GM12878 (cell line): ENCODE measurements at regions of chr12 and their contacts with region 1.

Region 1: GRCh38 chr12:124992874-124993625 is 395 bp upstream of the BRI3BP start:
- DNase-seq: peak; percentile 69
- ATAC-seq: peak; percentile 61
- H3K4me3 ChIP-seq: peak overlapping the region; percentile 58; the same call in 1 of the 2 replicates
- H3K27ac ChIP-seq: peak overlapping the region; percentile 47
- H3K4me1 ChIP-seq: peaks cover 14% of the 10 kb centered on the region
- H3K27me3 ChIP-seq: no peaks in the 10 kb centered on the region
- CTCF ChIP-seq: peak; percentile 61 to 71 (median 66)
- EP300 ChIP-seq: no peak
- POLR2A ChIP-seq: peak; percentile 34; the same call in 1 of the 2 replicates
- RAD21 ChIP-seq: 0 out of 2 replicates have a peak, but pooled peaks have one; percentile 5

Region 2: DNA sequence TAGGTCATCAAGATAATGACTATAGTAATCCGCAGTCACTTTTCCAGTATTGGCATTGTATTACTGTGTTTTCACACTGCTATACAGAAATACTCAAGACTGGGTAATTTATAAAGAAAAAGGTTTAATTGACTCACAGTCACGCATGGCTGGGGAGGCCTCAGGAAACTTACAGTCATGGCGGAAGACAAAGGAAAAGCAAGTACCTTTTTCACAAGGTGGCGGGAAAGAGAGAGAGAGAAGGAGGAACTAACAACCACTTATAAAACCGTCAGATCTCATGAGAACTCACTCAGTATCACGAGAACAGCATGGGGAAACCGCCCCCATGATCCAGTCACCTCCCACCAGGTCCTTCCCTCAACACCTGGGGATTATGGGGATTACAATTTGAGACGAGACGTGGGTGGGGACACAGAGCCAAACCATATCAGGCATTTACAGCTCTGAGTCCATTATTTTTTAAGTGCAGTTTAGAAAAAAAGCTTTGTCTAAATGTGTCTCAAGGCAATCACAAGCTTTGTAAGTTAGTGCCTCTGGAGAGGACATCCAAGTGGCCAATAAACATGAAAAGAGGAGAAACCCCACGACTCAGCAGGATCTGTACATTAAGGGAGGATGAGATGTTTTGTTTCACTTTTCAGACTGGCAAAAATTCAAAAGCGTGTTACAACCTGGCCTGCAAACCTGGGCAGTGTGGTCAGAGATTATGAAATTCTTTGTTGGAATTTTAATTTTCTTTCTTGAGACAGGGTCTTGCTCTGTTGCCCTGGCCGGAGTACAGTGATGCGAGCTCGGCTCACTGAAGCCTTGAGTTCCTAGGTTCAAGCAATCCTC is 1148.9 kb before region 1 on chr12:
- CTCF ChIA-PET with region 1: no interaction called
- POLR2A ChIA-PET with region 1: no interaction called
- RAD21 ChIA-PET with region 1: no interaction called
- SMC1A ChIA-PET with region 1: no interaction called
- in situ Hi-C with region 1: no loop called
- intact Hi-C with region 1: no loop called
- DNase-seq: no peak
- ATAC-seq: no peak
- H3K4me3 ChIP-seq: no peak overlapping the region
- H3K27ac ChIP-seq: no peak overlapping the region
- H3K4me1 ChIP-seq: peaks cover 7% of the 10 kb centered on the region; the same call in 1 of the 2 replicates
- H3K27me3 ChIP-seq: no peaks in the 10 kb centered on the region
- CTCF ChIP-seq: no peak
- EP300 ChIP-seq: no peak
- POLR2A ChIP-seq: no peak
- RAD21 ChIP-seq: no peak

Region 3: GRCh38 chr12:124578445-124578844 is 414.6 kb before region 1 on chr12:
- CTCF ChIA-PET with region 1: no interaction called
- POLR2A ChIA-PET with region 1: no interaction called
- RAD21 ChIA-PET with region 1: no interaction called
- SMC1A ChIA-PET with region 1: no interaction called
- in situ Hi-C with region 1: no loop called
- intact Hi-C with region 1: no loop called
- DNase-seq: no peak
- ATAC-seq: no peak
- H3K4me3 ChIP-seq: no peak overlapping the region
- H3K27ac ChIP-seq: no peak overlapping the region
- H3K4me1 ChIP-seq: no peaks in the 10 kb centered on the region
- H3K27me3 ChIP-seq: no peaks in the 10 kb centered on the region
- CTCF ChIP-seq: no peak
- EP300 ChIP-seq: no peak
- POLR2A ChIP-seq: no peak
- RAD21 ChIP-seq: no peak

Region 4: GRCh38 chr12:124940549-124941527 is 52.2 kb before region 1 on chr12:
- CTCF ChIA-PET with region 1: interaction called, 20 read pairs
- POLR2A ChIA-PET with region 1: interaction called, 19 read pairs
- RAD21 ChIA-PET with region 1: interaction called, 15 read pairs
- SMC1A ChIA-PET with region 1: interaction called, 8 read pairs
- in situ Hi-C with region 1: no loop called
- intact Hi-C with region 1: loop called (anchors 1 kb)
- DNase-seq: peak; percentile 82
- ATAC-seq: peak; percentile 74
- H3K4me3 ChIP-seq: peak overlapping the region; percentile 68
- H3K27ac ChIP-seq: peak overlapping the region; percentile 97
- H3K4me1 ChIP-seq: peaks cover 17% of the 10 kb centered on the region
- H3K27me3 ChIP-seq: no peaks in the 10 kb centered on the region
- CTCF ChIP-seq: peak; percentile 92 to 98 (median 93)
- EP300 ChIP-seq: no peak
- POLR2A ChIP-seq: peak; percentile 68
- RAD21 ChIP-seq: peak; percentile 63

Region 5: DNA sequence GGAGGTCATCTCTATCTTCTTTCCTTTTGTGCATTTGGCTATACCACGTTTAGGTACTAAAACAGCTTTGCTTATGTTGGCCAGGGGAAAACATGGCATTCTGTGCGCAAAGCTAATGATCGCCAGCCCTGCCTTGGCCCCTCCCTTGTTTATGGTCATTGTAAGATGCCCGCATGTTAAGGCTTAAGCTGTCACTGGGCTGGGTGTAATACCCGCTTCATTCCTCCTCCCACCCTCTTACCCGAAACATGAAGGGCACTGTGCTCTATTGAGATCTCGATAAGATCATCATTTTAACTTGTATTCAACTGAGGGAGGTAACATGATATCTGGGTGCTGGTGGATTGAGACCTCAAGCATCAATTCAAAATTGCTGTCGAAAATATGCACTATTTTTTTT is 35.1 kb after region 1 on chr12:
- CTCF ChIA-PET with region 1: no interaction called
- POLR2A ChIA-PET with region 1: no interaction called
- RAD21 ChIA-PET with region 1: no interaction called
- SMC1A ChIA-PET with region 1: no interaction called
- in situ Hi-C with region 1: no loop called
- intact Hi-C with region 1: no loop called
- DNase-seq: no peak
- ATAC-seq: no peak
- H3K4me3 ChIP-seq: no peak overlapping the region
- H3K27ac ChIP-seq: no peak overlapping the region
- H3K4me1 ChIP-seq: no peaks in the 10 kb centered on the region
- H3K27me3 ChIP-seq: no peaks in the 10 kb centered on the region
- CTCF ChIP-seq: no peak
- EP300 ChIP-seq: no peak
- POLR2A ChIP-seq: no peak
- RAD21 ChIP-seq: no peak